A549 (cell line): ENCODE measurements at regions of chr1 and their contacts with region 1.

Region 1: DNA sequence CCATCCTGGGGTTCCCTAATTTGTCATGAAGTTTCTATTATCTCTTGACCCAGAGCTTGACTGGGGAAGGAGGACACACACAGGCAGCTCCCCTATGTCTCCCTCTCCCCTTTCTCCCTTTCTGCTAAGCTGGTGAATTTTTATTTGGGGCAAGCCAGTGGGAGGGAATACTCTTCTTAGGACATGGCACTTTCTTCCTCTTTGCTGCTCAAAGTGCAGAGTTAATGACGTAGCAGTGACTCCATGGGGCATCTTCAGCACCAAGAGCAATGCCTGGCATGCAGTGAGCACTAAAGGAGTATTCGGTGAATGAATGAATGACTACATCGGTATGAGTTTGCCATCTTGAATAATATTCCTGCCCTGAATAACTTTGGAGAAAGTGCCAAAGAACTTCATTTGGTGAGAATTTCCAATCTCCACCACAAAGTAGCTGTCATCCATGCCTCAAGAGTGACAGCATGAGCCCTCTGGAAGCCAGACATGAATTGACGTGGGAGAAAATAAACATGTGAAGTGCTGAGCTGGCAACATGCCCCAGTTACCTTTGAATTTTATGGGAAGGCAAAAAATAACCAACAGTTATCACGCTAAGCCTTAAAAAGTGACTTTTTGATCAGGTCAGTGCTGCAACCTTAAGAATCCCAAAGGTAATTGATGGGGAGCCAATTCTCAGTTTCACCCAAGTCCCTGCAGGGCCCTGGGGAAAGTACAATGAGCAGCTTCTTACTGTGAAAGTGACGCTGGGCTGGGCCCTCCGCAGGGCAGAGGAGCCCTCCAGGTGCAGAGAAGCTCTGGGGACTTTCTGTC is 22.1 kb upstream of the ATF3 start:
- DNase-seq: no peak
- ATAC-seq: no peak
- H3K4me3 ChIP-seq: no peak overlapping the region
- H3K27ac ChIP-seq: no peak overlapping the region
- H3K4me1 ChIP-seq: no peaks in the 10 kb centered on the region
- CTCF ChIP-seq: no peak
- EP300 ChIP-seq: no peak
- POLR2A ChIP-seq: no peak
- RAD21 ChIP-seq: no peak

Region 2: DNA sequence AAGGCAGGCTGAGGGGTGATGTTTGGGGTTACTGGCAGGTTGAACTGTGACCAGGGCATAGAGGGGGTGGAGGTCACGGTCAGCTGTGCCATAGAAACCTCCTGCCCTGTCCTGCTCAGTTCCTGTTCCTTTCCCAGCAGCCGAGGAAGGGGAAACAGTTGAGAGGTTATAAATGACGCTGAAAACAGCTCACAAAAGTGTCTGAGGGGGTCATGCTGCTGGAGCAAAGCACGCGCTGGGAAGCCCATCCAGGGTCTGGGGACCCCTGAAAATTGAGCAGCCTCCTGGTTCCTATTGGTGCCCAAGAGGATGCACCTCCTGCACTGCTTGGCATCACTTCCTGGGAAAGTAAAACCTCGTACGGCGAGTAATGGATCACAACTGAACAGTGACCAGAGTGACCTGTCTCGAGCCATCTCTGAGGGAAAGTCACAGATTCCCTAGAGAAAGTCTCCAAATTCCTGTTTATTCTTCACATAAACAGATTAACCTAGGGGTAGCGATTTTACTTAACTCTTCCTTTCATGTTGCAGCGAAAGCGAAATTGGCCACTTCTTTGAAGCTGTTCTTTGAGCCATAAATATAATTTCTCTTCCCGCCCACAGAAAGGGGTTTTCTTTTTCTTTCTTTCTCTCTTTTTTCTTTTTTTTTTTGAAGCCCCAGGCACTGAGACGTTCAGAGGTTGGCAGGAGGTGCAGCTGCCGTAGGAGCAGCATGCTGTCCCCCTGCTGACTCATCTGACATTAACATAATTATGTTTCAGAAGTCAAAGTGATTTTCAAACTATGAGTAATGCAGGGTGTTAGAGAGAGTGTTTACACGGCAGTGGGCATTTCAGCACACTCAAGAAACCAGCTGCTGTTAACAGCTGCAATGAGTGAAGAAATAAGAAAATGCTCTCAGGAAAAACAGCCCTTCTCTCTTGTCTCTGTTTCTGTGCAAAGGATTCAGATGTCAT is 19.6 kb before region 1 on chr1:
- CTCF ChIA-PET with region 1: interaction called, 10 read pairs
- POLR2A ChIA-PET with region 1: no interaction called
- DNase-seq: peak; percentile 66 to 72
- ATAC-seq: peak; percentile 80 to 89
- H3K4me3 ChIP-seq: peak overlapping the region; percentile 52
- H3K27ac ChIP-seq: peak overlapping the region; percentile 78 to 84
- H3K4me1 ChIP-seq: peaks cover 15% of the 10 kb centered on the region
- CTCF ChIP-seq: no peak
- EP300 ChIP-seq: no peak
- POLR2A ChIP-seq: no peak
- RAD21 ChIP-seq: no peak